ENCODE measurements at regions of chr19 and their contacts with region 1.

Region 1: GRCh38 chr19:46016426-46017094 is 6.3 kb downstream of the PGLYRP1 start:
- DNase-seq: peak; percentile 61 to 97 (median 80)

Region 2: DNA sequence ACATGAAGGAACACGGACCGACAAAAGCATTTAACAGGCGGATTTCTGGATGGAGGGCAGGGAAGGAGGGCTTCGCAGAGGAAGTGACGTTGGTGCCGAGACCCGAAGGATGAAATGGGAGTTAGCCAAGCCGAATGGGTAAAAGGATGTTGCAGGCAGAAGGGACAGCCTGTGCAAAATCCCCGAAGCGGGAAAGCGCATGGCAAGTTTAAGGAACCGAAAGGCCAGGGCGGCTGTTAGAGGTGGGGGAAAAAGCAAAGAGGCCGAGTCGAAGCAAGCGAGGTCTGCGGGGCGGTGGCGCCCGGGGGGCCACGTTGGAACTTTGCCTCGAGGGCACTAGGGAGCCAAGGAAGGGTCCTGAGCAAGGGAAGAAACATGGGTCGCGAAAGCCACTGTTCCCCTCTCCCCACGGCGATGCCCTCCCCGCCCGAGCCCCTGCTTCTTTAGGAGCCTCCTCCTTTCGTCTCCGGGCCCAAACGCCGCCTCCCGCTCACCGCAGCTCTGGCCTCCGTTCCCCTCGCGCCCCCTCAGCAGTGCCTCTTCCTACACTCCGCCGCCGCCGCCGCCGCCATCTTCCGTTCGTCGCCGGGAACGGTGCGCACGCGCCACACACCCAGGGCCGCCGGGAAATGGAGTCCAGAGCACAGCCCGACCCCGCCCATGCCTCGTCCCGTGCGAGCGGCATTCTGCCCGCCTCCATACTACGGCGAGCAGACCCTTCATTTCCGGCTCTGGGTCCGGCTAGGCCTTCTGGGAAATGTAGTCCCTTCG is 153.8 kb before region 1 on chr19 and contains the start of gene SYMPK:
- intact Hi-C with region 1: loop called (anchors 2 kb)
- DNase-seq: peak; percentile 98 to 100 (median 99)

Region 3: DNA sequence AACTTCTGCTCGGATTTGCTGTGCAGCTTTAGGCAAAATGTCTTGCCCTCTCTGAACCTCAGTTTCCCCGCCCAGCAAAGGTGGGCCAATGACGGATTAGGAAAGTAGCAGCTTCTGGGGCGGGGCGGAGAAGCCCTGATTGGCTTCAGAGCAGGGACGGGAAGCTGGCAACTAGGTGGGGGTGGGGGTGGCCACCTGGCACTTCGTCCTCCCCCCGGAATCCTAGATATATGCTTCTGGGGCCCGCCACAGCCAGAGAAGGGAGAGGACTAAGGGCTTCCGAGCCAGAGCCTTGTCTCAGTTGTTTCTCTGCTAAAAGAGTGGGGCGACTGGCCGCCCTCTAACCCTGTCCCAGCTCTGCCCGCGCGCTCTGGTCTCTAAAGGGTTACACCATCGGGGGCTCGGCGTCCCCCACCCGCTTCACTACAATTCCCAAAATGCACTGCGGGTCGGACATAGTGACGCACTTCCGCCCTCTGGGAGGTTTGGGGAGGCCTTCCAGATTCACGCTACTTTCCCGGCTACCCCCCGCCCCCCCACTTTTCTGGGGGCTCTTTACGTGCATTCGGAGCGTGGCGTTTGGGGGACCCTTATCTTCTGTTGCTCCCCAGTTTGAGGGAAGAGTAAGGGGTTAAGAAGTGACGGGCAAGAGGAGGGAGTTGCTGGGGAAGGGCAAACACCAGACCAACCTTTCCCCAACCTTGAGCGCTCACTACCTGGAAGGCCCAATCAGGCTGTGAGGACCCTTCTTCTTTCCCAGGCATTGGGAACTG is 129.9 kb before region 1 on chr19:
- intact Hi-C with region 1: loop called (anchors 2 kb)
- DNase-seq: peak; percentile 86 to 98 (median 90)

Region 4: DNA sequence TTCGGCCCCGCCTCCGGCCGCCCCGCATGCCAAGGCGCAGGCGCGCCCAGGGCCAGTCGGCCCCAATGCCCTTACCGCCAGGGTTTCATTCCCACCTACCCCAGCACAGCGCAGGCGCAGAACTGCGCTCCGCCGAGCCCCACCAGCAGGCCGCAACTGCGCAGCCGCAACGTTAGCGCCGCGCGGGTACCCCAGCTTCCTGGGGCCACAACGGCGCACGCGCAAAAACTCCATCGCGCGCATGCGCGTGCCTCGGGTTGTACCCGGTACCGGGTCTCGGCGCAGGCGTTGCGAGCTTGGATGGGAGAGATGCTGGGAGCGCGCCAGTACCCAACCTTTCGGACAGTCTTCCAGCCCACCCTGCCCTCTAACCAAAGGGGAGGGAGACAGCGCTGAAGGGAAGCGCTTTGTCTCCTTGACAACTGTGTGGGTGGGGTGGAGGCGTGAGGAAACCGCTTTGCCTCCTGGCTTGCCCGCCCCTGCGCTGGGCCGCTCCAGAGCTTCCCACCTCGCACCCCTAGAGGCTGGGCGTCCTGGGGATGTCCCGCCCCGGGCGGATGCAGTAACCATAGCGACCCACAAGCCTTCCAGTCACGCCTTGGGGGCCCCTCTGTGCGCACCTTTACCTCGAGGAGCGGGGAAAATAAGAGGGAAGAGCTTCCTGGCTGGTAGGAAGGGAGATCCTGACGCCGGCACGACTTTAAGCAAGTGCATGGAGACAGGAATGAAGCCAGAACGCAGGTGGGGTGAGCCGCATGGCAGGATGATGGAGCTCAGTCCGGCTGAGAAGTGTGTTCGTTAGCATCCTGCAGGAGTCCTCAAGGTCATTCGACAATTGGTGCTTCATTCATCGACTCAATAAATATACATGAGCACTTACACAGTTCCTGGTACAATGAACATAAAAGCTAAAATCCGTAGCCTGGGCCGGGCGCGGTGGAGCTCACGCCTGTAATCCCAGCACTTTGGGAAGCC is 113.6 kb before region 1 on chr19:
- intact Hi-C with region 1: loop called (anchors 5 kb)
- DNase-seq: peak; percentile 95 to 100 (median 98)

Region 5: GRCh38 chr19:45952686-45953505 is 63.7 kb before region 1 on chr19:
- intact Hi-C with region 1: loop called (anchors 10 kb)
- DNase-seq: peak in 6 of 10 donors; percentile 51 to 93 (median 82)

Region 6: DNA sequence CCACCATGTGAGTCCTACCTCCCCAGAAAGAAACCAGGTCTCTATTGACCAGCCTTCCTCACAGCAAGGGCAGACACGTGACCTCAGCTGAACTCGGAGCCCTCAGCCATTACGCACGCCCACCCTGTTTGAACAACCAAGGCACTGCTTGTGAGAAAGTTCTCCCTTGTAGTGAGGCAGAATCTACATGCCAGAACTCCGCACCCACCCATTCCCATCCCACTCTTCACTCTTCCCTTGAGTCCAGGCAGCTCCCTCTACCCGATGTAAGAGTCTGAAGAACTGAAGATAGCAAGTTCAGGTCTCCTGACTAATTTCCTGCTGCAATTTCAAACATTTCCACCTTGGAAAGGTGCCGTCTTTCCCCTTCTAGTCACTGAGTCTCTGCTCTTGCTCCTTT is 49.3 kb before region 1 on chr19:
- intact Hi-C with region 1: no loop called
- DNase-seq: peak in 1 of 10 donors; percentile 23

Region 7: GRCh38 chr19:46040952-46041500 is 24.5 kb after region 1 on chr19 and contains the start of gene IGFL4:
- intact Hi-C with region 1: no loop called
- DNase-seq: no peak

Measured in posterior cingulate gyrus (tissue), 11 donors.